CD4-positive, alpha-beta memory T cell (primary cell): ENCODE measurements at regions of chrX and their contacts with region 1.

Region 1: GRCh38 chrX:65697915-65698796 is 30.7 kb downstream of the MSN start:
- DNase-seq: peak; percentile 71 to 86 (median 76)
- H3K4me3 ChIP-seq: peak overlapping the region; percentile 31 to 38
- H3K4me3 Mint-ChIP-seq: peak overlapping the region; percentile 71 to 92 (median 84)
- H3K27ac ChIP-seq: peak overlapping the region; percentile 56
- H3K27ac Mint-ChIP-seq: peak overlapping the region; percentile 89 to 97 (median 95)
- H3K4me1 ChIP-seq: peaks cover 95% of the 10 kb centered on the region
- H3K4me1 Mint-ChIP-seq: peaks cover 53 to 99% (median 86%) of the 10 kb centered on the region in 4 donors
- H3K27me3 ChIP-seq: no peaks in the 10 kb centered on the region
- H3K27me3 Mint-ChIP-seq: no peaks in the 10 kb centered on the region

Region 2: GRCh38 chrX:65601530-65602220 is 96.5 kb before region 1 on chrX:
- CTCF ChIA-PET with region 1: interaction called, 16 read pairs
- POLR2A ChIA-PET with region 1: interaction called, 33 read pairs
- intact Hi-C with region 1: no loop called
- DNase-seq: peak; percentile 47 to 75 (median 60)
- H3K4me3 ChIP-seq: no peak overlapping the region
- H3K4me3 Mint-ChIP-seq: peak overlapping the region; percentile 45 to 89 (median 70)
- H3K27ac ChIP-seq: peak overlapping the region; percentile 42
- H3K27ac Mint-ChIP-seq: peak overlapping the region; percentile 89 to 96 (median 93)
- H3K4me1 ChIP-seq: peaks cover 74% of the 10 kb centered on the region
- H3K4me1 Mint-ChIP-seq: peaks cover 46 to 89% (median 73%) of the 10 kb centered on the region in 4 donors
- H3K27me3 ChIP-seq: no peaks in the 10 kb centered on the region
- H3K27me3 Mint-ChIP-seq: no peaks in the 10 kb centered on the region

Region 3: GRCh38 chrX:65677954-65678469 is 20.1 kb before region 1 on chrX:
- CTCF ChIA-PET with region 1: interaction called, 12 read pairs
- POLR2A ChIA-PET with region 1: interaction called, 106 read pairs
- intact Hi-C with region 1: loop called (anchors 2 kb)
- DNase-seq: no peak
- H3K4me3 ChIP-seq: no peak overlapping the region
- H3K4me3 Mint-ChIP-seq: peak overlapping the region in 7 of 8 donors; percentile 57 to 83 (median 70)
- H3K27ac ChIP-seq: no peak overlapping the region
- H3K27ac Mint-ChIP-seq: peak overlapping the region; percentile 2 to 92 (median 68)
- H3K4me1 ChIP-seq: peaks cover 100% of the 10 kb centered on the region
- H3K4me1 Mint-ChIP-seq: peaks cover 65 to 97% (median 78%) of the 10 kb centered on the region in 4 donors
- H3K27me3 ChIP-seq: no peaks in the 10 kb centered on the region
- H3K27me3 Mint-ChIP-seq: no peaks in the 10 kb centered on the region

Region 4: GRCh38 chrX:65731684-65732289 is 33.6 kb after region 1 on chrX:
- CTCF ChIA-PET with region 1: no interaction called
- POLR2A ChIA-PET with region 1: no interaction called
- intact Hi-C with region 1: no loop called
- DNase-seq: no peak
- H3K4me3 ChIP-seq: no peak overlapping the region
- H3K4me3 Mint-ChIP-seq: peak overlapping the region in 2 of 8 donors; percentile 23 to 31
- H3K27ac ChIP-seq: peak overlapping the region; percentile 30
- H3K27ac Mint-ChIP-seq: peak overlapping the region; percentile 48 to 80 (median 71)
- H3K4me1 ChIP-seq: peaks cover 34% of the 10 kb centered on the region
- H3K4me1 Mint-ChIP-seq: peaks cover 26 to 55% (median 34%) of the 10 kb centered on the region in 4 donors
- H3K27me3 ChIP-seq: no peaks in the 10 kb centered on the region
- H3K27me3 Mint-ChIP-seq: no peaks in the 10 kb centered on the region

Region 5: DNA sequence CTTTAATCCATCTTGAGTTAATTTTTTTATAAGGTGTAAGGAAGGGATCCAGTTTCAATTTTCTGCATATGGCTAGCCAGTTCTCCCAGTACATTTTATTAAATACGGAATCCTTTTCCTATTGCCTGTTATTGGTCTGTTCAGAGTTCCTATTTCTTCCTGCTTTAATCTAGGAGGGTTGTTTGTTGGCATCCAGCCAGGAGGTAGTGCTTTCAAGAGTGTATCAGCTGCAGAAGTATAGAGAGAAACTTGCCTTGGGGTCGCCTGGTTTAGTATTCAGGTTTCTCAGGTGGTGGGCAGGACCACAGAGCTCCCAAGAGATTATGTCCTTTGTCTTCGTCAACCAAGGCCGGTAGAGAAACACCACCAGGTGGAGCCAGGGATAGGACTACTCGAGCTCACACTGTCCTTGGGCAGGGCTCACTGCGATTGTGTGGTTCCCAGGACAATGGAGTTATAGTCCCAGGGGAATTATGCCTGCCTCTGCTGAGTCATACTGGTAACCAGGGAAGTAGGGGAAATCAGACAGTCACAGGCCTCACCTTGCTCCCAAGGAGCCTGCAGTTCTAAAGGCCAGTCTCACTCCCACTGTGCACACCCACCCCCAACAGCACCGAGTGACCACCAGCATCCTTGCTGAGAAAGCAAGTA is 173.6 kb after region 1 on chrX:
- CTCF ChIA-PET with region 1: no interaction called
- POLR2A ChIA-PET with region 1: no interaction called
- intact Hi-C with region 1: no loop called
- DNase-seq: no peak
- H3K4me3 ChIP-seq: no peak overlapping the region
- H3K4me3 Mint-ChIP-seq: no peak overlapping the region
- H3K27ac ChIP-seq: no peak overlapping the region
- H3K27ac Mint-ChIP-seq: peak overlapping the region in 1 of 7 donors; percentile 24
- H3K4me1 ChIP-seq: peaks cover 9% of the 10 kb centered on the region
- H3K4me1 Mint-ChIP-seq: peaks cover 2 to 40% (median 20%) of the 10 kb centered on the region in 4 donors
- H3K27me3 ChIP-seq: no peaks in the 10 kb centered on the region
- H3K27me3 Mint-ChIP-seq: no peaks in the 10 kb centered on the region